ENCODE measurements at regions of chr4 and their contacts with region 1.

Region 1: DNA sequence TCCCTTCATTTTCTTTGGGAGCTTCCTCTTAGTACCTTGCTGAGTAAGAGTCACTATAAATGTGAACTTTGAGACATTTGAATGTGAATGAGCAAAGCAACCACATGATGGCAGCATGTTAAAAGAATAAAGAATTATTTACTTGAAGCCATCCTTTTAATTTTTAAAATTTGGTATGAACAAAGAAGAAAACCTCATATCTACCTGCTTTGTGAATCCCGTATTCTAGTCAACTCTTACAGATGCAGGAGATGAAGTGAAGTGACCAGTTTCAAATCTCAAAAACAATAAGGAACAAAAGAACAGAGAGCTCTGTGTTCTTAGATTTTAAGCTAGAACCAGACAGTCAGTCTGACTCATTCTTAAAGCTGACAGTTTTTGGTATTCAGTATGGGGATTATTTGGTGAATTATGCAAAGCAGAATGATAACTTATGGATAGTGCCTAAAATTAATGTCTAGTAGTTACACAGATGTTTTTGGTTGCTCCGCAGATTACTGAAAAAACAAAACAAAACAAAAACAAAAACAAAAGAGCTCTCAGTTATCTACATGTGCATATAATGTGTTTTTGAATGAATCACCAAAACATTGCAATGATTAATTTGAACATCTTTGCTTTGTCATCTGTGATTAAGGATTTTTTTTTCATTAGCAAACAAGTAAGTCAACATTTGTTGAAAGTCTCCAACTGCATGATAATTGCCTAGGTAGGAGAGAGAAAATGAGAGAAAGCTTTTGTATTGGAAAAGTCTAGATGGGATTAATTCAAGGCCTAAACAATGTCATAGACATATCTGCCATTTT is 48.2 kb upstream of the H2AZ1 start:
- DNase-seq: no peak
- H3K4me3 ChIP-seq: no peak overlapping the region
- H3K27ac ChIP-seq: no peak overlapping the region
- H3K27me3 ChIP-seq: no peaks in the 10 kb centered on the region
- CTCF ChIP-seq: peak; percentile 55

Region 2: DNA sequence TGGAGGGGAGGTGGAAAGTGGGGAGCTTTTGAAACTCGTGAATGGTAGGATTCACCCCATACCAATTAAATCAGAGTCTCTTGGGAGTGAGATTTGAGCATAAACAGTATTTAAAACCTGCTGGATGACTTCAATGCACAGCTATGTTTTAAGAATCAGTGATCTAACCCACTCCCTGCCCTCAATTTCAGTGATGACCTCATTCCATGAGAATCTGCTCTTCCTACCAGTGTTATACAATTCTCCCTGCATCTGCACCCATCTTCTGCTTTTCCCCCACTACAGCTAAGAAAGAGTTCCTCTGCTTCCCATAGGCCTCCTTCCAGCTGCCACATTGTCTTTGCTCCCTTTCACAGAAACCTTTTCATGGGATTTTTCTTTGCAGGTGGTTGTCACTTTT is 29.9 kb before region 1 on chr4:
- CTCF ChIA-PET with region 1: interaction called, 24 read pairs
- POLR2A ChIA-PET with region 1: interaction called, 3 read pairs
- DNase-seq: peak; percentile 76
- H3K4me3 ChIP-seq: no peak overlapping the region
- H3K27ac ChIP-seq: peak overlapping the region; percentile 88
- H3K27me3 ChIP-seq: no peaks in the 10 kb centered on the region
- CTCF ChIP-seq: no peak

Region 3: DNA sequence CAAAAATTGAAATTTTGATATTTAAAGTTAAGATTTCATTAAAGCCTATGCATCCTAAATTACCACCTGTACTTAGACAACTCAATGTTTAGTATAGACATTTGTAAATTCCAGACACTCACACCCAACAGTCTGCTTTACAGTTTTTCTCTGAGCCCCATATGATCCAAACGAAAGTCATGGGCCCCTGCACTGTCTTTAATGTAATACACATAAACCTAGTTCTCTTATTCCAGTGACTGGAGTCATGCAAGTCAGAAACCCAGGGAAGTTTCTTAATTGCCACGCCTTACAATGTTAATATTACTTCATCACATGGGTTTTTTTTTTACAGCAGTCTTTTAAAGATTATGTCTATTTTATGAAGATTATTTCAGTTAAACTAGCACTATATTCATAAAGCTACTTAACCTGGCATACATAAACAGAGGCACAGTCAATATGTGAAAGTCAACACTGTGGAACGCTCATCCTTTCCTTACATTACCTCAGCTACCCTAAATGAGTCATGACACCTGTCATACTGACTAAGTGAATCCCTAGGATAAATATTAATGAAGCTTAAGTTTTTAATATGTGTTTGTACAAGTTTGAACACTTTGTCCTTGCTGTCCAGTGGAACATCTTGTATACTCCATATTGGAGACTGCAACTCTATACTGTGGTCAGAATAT is 19.5 kb after region 1 on chr4:
- CTCF ChIA-PET with region 1: interaction called, 157 read pairs
- POLR2A ChIA-PET with region 1: no interaction called
- DNase-seq: no peak
- H3K4me3 ChIP-seq: no peak overlapping the region
- H3K27ac ChIP-seq: no peak overlapping the region
- H3K27me3 ChIP-seq: no peaks in the 10 kb centered on the region
- CTCF ChIP-seq: no peak

Region 4: DNA sequence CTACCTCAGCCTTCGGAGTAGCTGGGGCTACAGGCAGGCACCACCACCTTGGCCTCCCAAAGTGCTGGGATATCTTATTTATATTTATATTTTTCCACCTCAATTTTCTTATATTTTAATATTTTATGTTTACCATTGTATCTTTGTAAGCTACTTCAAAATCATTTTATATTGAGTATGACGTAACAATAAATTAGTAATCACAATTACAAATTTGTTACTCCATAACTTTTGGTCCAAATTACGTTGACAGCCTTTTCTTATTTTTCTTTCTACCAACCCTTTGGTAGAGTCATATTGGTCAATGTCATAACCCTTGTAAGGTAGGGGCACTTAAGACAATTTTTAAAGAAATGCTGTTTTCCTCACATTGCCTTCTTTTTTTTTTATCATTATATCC is 55.8 kb after region 1 on chr4:
- CTCF ChIA-PET with region 1: interaction called, 16 read pairs
- POLR2A ChIA-PET with region 1: no interaction called
- DNase-seq: no peak
- H3K4me3 ChIP-seq: no peak overlapping the region
- H3K27ac ChIP-seq: no peak overlapping the region
- H3K27me3 ChIP-seq: no peaks in the 10 kb centered on the region
- CTCF ChIP-seq: no peak

Region 5: DNA sequence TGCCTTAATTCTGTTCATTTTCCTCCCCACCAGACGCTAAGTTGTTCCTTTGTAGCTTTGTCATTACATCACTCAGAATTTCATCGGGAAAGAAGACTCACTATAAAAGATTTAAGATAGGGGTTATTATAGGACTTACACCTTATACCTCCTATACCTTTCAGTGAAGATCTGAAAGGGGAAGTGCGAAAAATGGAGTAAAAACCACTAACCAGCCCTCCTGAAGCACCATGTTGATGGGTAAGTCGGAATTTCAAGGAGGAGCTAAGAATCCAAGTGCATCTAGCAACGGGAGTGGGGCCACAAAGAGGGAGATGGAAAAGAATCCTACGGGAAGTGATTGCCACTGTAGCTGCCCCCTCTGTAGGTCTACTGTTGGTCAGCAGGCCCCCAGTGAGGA is 70.9 kb after region 1 on chr4:
- CTCF ChIA-PET with region 1: interaction called, 91 read pairs
- POLR2A ChIA-PET with region 1: no interaction called
- DNase-seq: no peak
- H3K4me3 ChIP-seq: no peak overlapping the region
- H3K27ac ChIP-seq: no peak overlapping the region
- H3K27me3 ChIP-seq: peaks cover 3% of the 10 kb centered on the region
- CTCF ChIP-seq: no peak

Region 6: GRCh38 chr4:100177855-100178254 is 179.6 kb after region 1 on chr4:
- CTCF ChIA-PET with region 1: no interaction called
- POLR2A ChIA-PET with region 1: no interaction called
- DNase-seq: no peak
- H3K4me3 ChIP-seq: no peak overlapping the region
- H3K27ac ChIP-seq: no peak overlapping the region
- H3K27me3 ChIP-seq: no peaks in the 10 kb centered on the region
- CTCF ChIP-seq: no peak

Measured in AG04450 (cell line).